Endothelial cell of umbilical vein (primary cell): ENCODE measurements at regions of chr22 and their contacts with region 1.

Region 1: GRCh38 chr22:19772422-19773324 is 12.1 kb downstream of the TBX1 start:
- DNase-seq: peak; percentile 83
- H3K4me3 ChIP-seq: no peak overlapping the region
- H3K27ac ChIP-seq: no peak overlapping the region
- H3K4me1 ChIP-seq: peaks cover 12% of the 10 kb centered on the region
- H3K27me3 ChIP-seq: peaks cover 6 to 9% of the 10 kb centered on the region in 2 experiments
- CTCF ChIP-seq: peak; percentile 15 to 29
- POLR2A ChIP-seq: no peak

Region 2: GRCh38 chr22:19844377-19845053 is 71.8 kb after region 1 on chr22:
- CTCF ChIA-PET with region 1: interaction called, 3 read pairs
- POLR2A ChIA-PET with region 1: no interaction called
- dilution Hi-C with region 1: no loop called
- intact Hi-C with region 1: loop called (anchors 2 kb)
- DNase-seq: peak; percentile 77
- H3K4me3 ChIP-seq: no peak overlapping the region
- H3K27ac ChIP-seq: peak overlapping the region; percentile 80
- H3K4me1 ChIP-seq: peaks cover 32% of the 10 kb centered on the region
- H3K27me3 ChIP-seq: no peaks in the 10 kb centered on the region
- CTCF ChIP-seq: peak; percentile 17 to 39
- POLR2A ChIP-seq: no peak